WTC11 (cell line): ENCODE measurements at regions of chr12 and their contacts with region 1.

Region 1: DNA sequence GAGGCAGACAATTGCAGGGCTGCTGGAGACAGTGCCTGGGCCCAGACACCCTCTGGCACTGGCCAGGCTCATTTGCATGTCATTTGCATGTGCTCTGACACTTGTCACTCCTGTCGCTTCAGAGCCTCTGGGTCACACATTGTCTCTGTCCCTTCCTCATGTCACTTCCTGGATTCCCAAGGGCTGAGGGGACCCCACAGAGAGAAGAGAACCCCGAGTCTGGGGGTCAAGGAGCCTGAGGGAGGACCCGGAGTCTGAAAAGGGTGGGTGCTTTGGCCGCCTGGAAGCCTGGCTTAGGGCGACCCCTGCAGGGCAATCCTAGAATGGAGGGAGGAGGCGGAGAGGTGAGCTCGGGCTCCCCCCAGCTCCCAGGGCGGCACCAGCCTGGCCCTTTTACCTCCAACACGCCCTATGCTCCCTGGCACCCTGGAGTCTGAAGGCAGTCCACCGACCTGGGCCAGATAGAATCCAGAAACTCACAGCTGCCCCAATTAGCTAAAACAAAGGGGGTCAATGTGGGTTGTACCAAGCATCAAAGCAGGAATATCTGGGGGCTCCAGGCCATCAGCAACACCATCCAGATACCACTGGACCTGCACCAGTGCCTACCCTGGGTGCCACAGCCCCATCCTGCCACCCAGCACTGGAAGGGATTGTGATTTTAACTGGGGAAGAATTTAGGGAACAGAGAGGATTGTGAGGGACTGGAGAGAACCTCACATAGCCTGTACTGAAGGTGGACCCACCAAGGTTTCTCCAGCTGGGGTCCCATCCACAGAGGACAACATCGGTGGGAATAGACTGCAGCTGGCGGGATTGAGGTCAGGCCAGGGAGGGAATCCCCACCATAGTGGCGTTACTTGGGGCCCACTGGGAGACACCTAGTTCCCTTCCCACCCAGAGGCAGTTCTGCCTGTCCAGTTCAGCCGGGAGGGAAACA is 21.8 kb upstream of the KRT78 start:
- DNase-seq: peak; percentile 90
- ATAC-seq: peak; percentile 74
- H3K4me3 Mint-ChIP-seq: no peak overlapping the region
- H3K27ac Mint-ChIP-seq: no peak overlapping the region
- H3K4me1 Mint-ChIP-seq: peaks cover 16% of the 10 kb centered on the region
- H3K27me3 Mint-ChIP-seq: peaks cover 26% of the 10 kb centered on the region
- CTCF ChIP-seq: peak; percentile 86

Region 2: DNA sequence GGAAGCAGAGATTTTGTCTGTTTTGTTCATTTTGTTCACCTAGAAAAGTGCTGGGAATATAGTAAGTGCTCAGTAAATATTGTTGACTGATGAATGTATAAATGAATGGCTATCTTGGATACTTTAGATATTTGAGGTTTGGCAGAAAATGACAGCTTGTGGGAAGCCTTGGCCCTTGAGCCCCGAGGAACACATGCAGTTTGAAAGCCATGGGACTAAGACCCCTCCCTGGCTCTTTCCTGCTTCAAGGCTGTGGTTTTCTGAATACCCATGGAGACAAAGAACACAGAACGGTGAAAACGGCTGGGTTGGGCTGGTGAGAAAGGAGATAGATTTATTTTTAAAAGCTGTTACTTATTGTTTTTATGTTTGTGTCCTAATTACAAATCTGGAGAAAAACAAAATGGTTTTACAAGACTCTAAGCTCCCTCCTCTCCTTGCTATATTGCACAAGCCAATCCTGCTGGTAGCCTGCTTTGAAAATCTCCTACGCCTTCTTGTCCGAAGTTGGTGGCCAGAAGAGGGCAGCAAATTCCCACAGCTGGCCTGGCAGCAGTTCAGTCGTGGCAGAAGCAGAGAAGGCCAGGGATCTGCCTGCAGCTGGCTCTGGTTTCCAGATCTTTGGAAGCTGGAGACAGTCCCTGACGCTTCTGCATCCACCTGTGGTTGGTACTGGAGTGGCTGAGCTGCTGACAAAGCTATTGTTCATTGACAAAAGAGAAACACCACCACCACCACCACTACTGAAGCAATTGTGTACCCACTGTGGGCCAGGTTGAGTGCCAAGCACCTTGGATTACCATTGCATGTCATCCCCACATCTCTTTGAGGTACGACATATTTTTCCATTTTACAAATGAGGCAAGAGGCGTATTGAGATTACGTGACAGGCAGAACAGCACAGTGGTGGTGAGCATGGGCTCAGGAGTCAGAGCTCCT is 498.1 kb before region 1 on chr12:
- CTCF ChIA-PET with region 1: interaction called, 11 read pairs
- POLR2A ChIA-PET with region 1: no interaction called
- DNase-seq: peak; percentile 81
- ATAC-seq: peak; percentile 91
- H3K4me3 Mint-ChIP-seq: no peak overlapping the region
- H3K27ac Mint-ChIP-seq: no peak overlapping the region
- H3K4me1 Mint-ChIP-seq: no peaks in the 10 kb centered on the region
- H3K27me3 Mint-ChIP-seq: no peaks in the 10 kb centered on the region
- CTCF ChIP-seq: peak; percentile 50; the same call in 1 of the 2 replicates

Region 3: DNA sequence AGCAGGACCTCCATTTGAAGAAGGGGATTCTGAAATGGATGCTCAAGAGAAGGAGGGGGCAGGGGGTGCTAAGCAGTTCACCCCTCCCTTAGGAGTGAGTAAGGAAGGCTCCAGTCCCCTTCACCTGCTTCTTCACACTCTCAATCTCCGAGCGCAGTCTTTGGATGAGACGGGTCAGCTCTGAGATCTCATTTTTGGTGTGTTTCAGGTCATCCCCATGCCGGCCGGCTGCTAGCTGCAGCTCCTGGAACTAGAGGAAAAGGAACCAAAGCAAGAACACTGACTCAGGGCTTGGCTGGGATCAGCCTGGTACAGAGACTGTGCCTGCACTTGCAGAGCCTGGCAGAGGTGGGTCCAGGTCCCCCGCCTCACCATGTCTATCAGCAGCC is 259.5 kb before region 1 on chr12:
- CTCF ChIA-PET with region 1: interaction called, 20 read pairs
- POLR2A ChIA-PET with region 1: no interaction called
- DNase-seq: no peak
- ATAC-seq: no peak
- H3K4me3 Mint-ChIP-seq: no peak overlapping the region
- H3K27ac Mint-ChIP-seq: no peak overlapping the region
- H3K4me1 Mint-ChIP-seq: peaks cover 4% of the 10 kb centered on the region; the same call in 1 of the 2 replicates
- H3K27me3 Mint-ChIP-seq: peaks cover 3% of the 10 kb centered on the region; the same call in 1 of the 2 replicates
- CTCF ChIP-seq: no peak

Region 4: DNA sequence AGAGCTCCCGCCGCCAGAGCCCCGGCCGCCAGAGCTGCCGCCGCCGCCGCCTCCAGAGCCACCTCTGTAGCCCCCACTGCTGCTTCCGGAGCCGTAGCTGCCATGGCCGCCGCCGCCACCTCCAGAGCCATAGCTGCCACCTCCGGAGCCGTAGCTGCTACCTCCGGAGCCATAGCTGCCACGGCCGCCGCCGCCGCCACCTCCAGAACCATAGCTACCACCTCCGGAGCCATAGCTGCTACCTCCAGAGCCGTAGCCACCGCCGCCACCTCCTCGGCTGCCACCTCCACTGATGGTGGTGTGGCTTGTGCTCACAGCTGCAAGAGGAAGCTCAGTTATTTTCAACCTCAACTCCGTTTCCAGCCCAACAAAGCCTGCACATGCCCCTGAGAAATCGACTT is 195.3 kb before region 1 on chr12:
- CTCF ChIA-PET with region 1: interaction called, 11 read pairs
- POLR2A ChIA-PET with region 1: no interaction called
- DNase-seq: no peak
- ATAC-seq: no peak
- H3K4me3 Mint-ChIP-seq: no peak overlapping the region
- H3K27ac Mint-ChIP-seq: no peak overlapping the region
- H3K4me1 Mint-ChIP-seq: no peaks in the 10 kb centered on the region
- H3K27me3 Mint-ChIP-seq: peaks cover 6% of the 10 kb centered on the region; the same call in 1 of the 2 replicates
- CTCF ChIP-seq: no peak

Region 5: GRCh38 chr12:52715416-52715815 is 155.2 kb before region 1 on chr12:
- CTCF ChIA-PET with region 1: interaction called, 56 read pairs
- POLR2A ChIA-PET with region 1: no interaction called
- DNase-seq: peak; percentile 75
- ATAC-seq: peak; percentile 62
- H3K4me3 Mint-ChIP-seq: peak overlapping the region; percentile 47
- H3K27ac Mint-ChIP-seq: no peak overlapping the region
- H3K4me1 Mint-ChIP-seq: 0 out of 2 replicates have a peak, but pooled peaks cover 6% of the 10 kb centered on the region
- H3K27me3 Mint-ChIP-seq: peaks cover 53% of the 10 kb centered on the region
- CTCF ChIP-seq: no peak

Region 6: DNA sequence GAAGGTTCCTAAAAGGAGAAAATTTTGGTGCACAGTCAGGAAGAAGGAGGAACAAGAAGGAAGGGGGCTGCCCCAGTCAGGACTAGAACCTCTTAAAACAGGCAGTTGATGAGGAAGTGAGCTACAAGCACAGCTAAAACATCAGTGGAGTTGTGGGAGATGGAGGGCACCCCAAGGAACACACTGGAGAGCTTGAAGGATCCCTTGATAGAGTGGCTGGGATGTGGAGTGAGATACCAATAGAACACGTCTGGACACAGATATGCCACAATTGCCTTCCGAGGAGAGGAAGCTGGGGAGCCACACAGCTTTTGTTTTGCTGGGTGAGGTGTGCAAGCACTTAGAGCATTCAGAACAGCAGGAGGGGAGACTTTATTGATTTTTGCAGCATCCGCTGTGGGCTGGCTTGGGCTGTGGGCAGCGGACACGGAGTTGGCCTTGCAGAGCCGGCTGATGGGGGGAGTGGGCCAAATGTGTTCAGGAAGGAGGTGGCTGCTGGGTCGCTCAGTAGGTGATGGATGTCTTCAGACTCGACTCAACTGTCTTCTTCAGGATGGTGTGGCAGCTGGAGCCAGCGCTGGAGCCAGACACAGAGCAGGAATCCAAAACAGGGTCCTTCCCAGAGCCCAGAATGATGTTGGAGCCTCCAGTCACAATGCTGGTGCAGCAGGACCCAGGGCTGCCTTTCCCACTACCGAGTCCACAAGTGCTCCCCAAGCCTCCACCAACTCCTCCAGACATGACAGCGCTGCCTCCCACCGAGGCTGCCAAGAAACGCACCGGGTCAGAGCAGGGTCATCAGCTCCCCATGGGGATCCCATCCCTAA is 31.8 kb before region 1 on chr12:
- CTCF ChIA-PET with region 1: interaction called, 10 read pairs
- POLR2A ChIA-PET with region 1: no interaction called
- DNase-seq: no peak
- ATAC-seq: no peak
- H3K4me3 Mint-ChIP-seq: no peak overlapping the region
- H3K27ac Mint-ChIP-seq: no peak overlapping the region
- H3K4me1 Mint-ChIP-seq: no peaks in the 10 kb centered on the region
- H3K27me3 Mint-ChIP-seq: peaks cover 5% of the 10 kb centered on the region; the same call in 1 of the 2 replicates
- CTCF ChIP-seq: no peak